AG04450 (cell line): ENCODE measurements at regions of chr6 and their contacts with region 1.

Region 1: DNA sequence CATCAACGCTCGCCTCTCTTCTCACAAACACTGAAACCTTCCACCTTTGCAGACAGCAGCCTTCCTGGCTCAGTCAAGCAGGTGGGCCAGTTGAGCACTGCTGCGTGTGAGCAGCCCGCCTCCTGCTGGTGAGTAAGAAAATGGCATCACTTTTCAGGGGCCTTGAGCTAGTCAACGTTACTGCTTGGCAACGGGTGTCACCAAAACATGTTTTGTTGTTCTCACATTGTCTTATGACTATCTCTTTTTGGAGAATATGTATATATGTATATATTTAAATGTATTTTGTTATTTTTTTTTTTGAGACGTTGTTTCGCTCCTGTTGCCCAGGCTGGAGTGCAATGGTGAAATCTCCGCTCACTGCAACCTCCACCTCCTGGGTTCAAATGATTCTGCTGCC is 97.0 kb upstream of the AGPAT4 start:
- DNase-seq: peak; percentile 42
- H3K4me3 ChIP-seq: no peak overlapping the region
- H3K27ac ChIP-seq: no peak overlapping the region
- H3K27me3 ChIP-seq: no peaks in the 10 kb centered on the region
- CTCF ChIP-seq: peak; percentile 96

Region 2: GRCh38 chr6:160520043-160520904 is 850.6 kb before region 1 on chr6:
- CTCF ChIA-PET with region 1: interaction called, 34 read pairs
- POLR2A ChIA-PET with region 1: no interaction called
- DNase-seq: peak; percentile 20
- H3K4me3 ChIP-seq: peak overlapping the region; percentile 71
- H3K27ac ChIP-seq: no peak overlapping the region
- H3K27me3 ChIP-seq: no peaks in the 10 kb centered on the region
- CTCF ChIP-seq: no peak

Region 3: DNA sequence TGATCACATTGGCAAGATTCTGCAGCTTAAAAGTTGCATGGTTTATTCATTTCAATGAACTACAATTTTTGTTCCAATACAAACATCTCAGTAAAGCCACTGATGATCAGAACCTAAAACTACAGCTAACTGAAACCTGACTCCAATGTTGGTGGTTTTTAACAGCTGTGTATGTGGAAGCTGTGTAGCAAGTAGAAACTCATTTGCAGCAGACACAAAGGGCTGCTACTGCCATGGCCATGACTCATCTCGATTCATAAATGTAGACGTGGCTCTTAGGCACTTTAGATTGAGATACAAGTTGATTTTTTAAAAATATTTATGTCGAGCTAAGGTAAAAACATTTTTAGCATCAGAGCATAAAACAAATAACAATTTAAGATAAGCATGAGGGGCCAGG is 398.8 kb before region 1 on chr6:
- CTCF ChIA-PET with region 1: interaction called, 11 read pairs
- POLR2A ChIA-PET with region 1: no interaction called
- DNase-seq: peak; percentile 90
- H3K4me3 ChIP-seq: no peak overlapping the region
- H3K27ac ChIP-seq: peak overlapping the region; percentile 89
- H3K27me3 ChIP-seq: no peaks in the 10 kb centered on the region
- CTCF ChIP-seq: no peak

Region 4: GRCh38 chr6:161011492-161012480 is 359.1 kb before region 1 on chr6:
- CTCF ChIA-PET with region 1: interaction called, 13 read pairs
- POLR2A ChIA-PET with region 1: no interaction called
- DNase-seq: no peak
- H3K4me3 ChIP-seq: no peak overlapping the region
- H3K27ac ChIP-seq: no peak overlapping the region
- H3K27me3 ChIP-seq: no peaks in the 10 kb centered on the region
- CTCF ChIP-seq: no peak

Region 5: GRCh38 chr6:161101517-161101916 is 269.4 kb before region 1 on chr6:
- CTCF ChIA-PET with region 1: interaction called, 83 read pairs
- POLR2A ChIA-PET with region 1: no interaction called
- DNase-seq: no peak
- H3K4me3 ChIP-seq: no peak overlapping the region
- H3K27ac ChIP-seq: no peak overlapping the region
- H3K27me3 ChIP-seq: no peaks in the 10 kb centered on the region
- CTCF ChIP-seq: peak; percentile 39

Region 6: GRCh38 chr6:161152907-161153662 is 217.8 kb before region 1 on chr6:
- CTCF ChIA-PET with region 1: interaction called, 92 read pairs
- POLR2A ChIA-PET with region 1: no interaction called
- DNase-seq: no peak
- H3K4me3 ChIP-seq: no peak overlapping the region
- H3K27ac ChIP-seq: no peak overlapping the region
- H3K27me3 ChIP-seq: no peaks in the 10 kb centered on the region
- CTCF ChIP-seq: peak; percentile 56

Region 7: DNA sequence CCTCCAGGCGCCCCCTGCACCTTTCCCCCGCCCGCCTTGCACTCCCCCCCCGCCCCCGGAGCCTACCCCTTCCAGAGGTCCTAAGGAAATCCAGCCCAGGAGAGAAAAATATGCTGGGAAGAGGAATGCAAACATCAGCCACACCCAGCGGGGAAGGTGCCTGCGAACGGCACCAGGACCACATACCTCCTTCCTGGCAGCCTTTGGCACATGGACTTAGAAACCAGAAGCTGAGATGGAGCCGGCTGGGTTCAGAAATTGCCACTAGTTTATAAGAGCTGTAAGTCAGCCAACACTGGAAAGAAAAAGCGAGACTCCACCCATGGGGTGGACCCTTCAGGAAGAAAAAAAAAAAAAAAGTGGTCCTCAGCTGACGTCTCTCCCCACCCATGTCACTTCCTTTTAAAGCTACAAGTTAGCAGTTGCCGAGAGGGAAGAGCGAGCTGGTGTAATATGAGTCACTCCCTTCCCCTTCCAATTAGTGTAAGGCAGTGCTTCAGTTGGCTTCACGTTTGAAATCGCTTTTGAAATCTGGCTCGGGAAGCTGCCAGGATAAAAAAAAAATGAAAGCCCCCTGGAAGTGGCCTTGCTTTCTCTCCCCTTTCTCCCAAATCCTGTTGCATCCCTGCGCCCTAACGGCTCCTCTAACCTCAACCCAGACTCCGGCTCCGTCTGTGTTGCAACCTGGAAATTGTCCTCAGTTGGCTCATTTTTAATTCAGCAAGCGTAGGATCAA is 97.0 kb before region 1 on chr6 and contains the start of gene AGPAT4:
- CTCF ChIA-PET with region 1: interaction called, 51 read pairs
- POLR2A ChIA-PET with region 1: no interaction called
- DNase-seq: peak; percentile 95
- H3K4me3 ChIP-seq: peak within 1 kb of the TSS; percentile 84
- H3K27ac ChIP-seq: peak within 1 kb of the TSS; percentile 80
- H3K27me3 ChIP-seq: no peaks in the 10 kb centered on the region
- CTCF ChIP-seq: no peak
- polyA plus RNA-seq, gene AGPAT4: 7.8 and 10.0 TPM in 2 replicates